ENCODE measurements at regions of chr3 and their contacts with region 1.

Region 1: GRCh38 chr3:15405448-15406050 is 21.8 kb downstream of the METTL6 start:
- DNase-seq: peak; percentile 82
- H3K4me3 ChIP-seq: no peak overlapping the region
- H3K27ac ChIP-seq: no peak overlapping the region
- H3K4me1 ChIP-seq: no peaks in the 10 kb centered on the region
- CTCF ChIP-seq: peak; percentile 95

Region 2: DNA sequence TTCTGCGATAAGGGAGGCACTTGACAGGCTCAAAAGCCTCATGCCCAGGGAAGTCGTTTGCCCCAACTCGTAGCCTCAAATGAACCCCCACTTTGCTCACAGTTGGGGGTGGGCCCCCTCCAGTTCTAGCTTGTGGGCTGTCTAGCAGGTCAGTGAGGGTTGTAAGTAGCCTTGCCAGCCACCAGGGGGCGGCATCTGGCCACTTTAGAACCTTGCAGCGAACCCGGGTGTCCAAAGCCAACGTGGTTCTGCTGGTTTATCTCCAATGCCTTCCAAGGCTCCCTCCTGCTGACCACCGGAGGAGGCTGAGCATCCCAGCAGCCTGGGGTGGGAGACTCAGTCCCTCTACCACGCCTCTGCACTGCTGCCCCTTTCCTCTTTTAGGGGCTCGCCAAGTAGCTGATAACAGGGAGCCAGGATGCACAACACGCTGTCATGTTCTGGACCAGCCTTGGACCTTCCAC is 297.4 kb before region 1 on chr3:
- CTCF ChIA-PET with region 1: no interaction called
- POLR2A ChIA-PET with region 1: interaction called, 3 read pairs
- intact Hi-C with region 1: loop called (anchors 5 kb)
- DNase-seq: peak; percentile 81
- H3K4me3 ChIP-seq: no peak overlapping the region
- H3K27ac ChIP-seq: no peak overlapping the region
- H3K4me1 ChIP-seq: peaks cover 3% of the 10 kb centered on the region
- CTCF ChIP-seq: peak; percentile 94

Region 3: GRCh38 chr3:15345608-15346137 is 59.9 kb before region 1 on chr3:
- CTCF ChIA-PET with region 1: no interaction called
- POLR2A ChIA-PET with region 1: no interaction called
- intact Hi-C with region 1: no loop called
- DNase-seq: peak; percentile 87
- H3K4me3 ChIP-seq: peak overlapping the region; percentile 5
- H3K27ac ChIP-seq: peak overlapping the region; percentile 91
- H3K4me1 ChIP-seq: peaks cover 60% of the 10 kb centered on the region
- CTCF ChIP-seq: no peak

Region 4: GRCh38 chr3:15361494-15362212 is 43.9 kb before region 1 on chr3:
- CTCF ChIA-PET with region 1: no interaction called
- POLR2A ChIA-PET with region 1: interaction called, 3 read pairs
- intact Hi-C with region 1: loop called (anchors 2 kb)
- DNase-seq: peak; percentile 67
- H3K4me3 ChIP-seq: peak overlapping the region; percentile 53
- H3K27ac ChIP-seq: peak overlapping the region; percentile 84
- H3K4me1 ChIP-seq: peaks cover 47% of the 10 kb centered on the region
- CTCF ChIP-seq: no peak

Region 5: DNA sequence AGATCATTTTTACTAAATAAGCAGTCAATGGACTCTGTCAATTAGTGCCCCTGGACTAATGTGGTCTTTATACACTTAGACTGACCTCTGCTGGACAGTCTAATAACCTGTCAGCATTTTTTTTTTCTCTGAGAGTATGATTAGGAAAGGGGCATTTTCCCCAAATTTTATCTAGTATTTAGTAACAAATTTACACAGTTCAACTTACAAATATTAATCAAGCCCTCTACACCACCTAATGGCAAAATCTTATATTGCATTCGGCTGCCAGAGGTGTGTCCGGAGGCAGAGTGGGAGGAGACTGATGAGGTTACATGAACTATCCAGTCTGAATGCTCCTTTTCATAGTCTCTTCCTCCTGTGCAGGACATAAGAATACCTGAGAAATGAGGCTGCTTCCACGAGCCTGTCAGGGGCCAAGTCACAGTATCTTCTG is 152.0 kb after region 1 on chr3:
- CTCF ChIA-PET with region 1: no interaction called
- POLR2A ChIA-PET with region 1: no interaction called
- intact Hi-C with region 1: loop called (anchors 5 kb)
- DNase-seq: peak; percentile 70
- H3K4me3 ChIP-seq: no peak overlapping the region
- H3K27ac ChIP-seq: no peak overlapping the region
- H3K4me1 ChIP-seq: peaks cover 17% of the 10 kb centered on the region
- CTCF ChIP-seq: peak; percentile 87

Region 6: GRCh38 chr3:15722877-15723620 is 317.5 kb after region 1 on chr3:
- CTCF ChIA-PET with region 1: no interaction called
- POLR2A ChIA-PET with region 1: no interaction called
- intact Hi-C with region 1: no loop called
- DNase-seq: no peak
- H3K4me3 ChIP-seq: no peak overlapping the region
- H3K27ac ChIP-seq: no peak overlapping the region
- H3K4me1 ChIP-seq: no peaks in the 10 kb centered on the region
- CTCF ChIP-seq: no peak

Region 7: DNA sequence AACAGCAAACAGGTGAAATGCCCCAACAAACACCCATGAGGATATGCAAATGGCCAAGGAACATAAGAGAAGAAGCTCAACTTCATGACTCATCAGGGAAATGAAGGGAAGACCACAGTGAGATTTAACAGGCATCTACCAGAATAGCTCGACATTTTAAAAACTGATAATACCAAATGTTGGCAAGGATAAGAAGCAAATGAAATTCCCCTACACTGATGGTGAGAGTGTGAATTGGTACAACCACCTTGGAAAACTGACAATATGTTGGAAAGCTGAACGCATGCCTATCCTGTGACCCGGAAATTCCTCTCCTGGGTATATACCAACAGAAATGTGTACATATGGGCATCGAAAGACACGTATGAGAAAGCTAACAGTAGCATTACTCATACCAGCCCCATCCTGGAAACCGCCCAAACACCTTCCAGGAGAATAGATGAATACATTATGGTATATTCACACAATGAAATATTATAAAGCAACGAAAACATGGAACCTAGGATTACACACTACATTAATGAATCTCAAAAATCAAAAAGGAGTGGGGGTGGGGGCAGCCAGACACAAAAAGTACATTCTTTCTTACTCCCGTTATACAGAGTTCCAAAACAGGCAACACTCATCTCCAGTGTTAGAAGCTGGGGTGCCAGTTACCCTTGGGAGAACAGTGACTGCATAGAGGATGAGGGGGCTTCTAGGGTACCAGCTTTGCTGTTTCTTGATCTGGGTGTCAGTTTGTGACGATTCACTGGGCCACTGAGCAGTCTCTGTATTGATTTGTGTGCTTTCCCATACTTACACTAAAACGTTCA is 1091.1 kb after region 1 on chr3:
- CTCF ChIA-PET with region 1: no interaction called
- POLR2A ChIA-PET with region 1: no interaction called
- intact Hi-C with region 1: no loop called
- DNase-seq: no peak
- H3K4me3 ChIP-seq: peak overlapping the region; percentile 2
- H3K27ac ChIP-seq: no peak overlapping the region
- H3K4me1 ChIP-seq: peaks cover 69% of the 10 kb centered on the region
- CTCF ChIP-seq: no peak